ENCODE measurements at regions of chr12 and their contacts with region 1.

Region 1: DNA sequence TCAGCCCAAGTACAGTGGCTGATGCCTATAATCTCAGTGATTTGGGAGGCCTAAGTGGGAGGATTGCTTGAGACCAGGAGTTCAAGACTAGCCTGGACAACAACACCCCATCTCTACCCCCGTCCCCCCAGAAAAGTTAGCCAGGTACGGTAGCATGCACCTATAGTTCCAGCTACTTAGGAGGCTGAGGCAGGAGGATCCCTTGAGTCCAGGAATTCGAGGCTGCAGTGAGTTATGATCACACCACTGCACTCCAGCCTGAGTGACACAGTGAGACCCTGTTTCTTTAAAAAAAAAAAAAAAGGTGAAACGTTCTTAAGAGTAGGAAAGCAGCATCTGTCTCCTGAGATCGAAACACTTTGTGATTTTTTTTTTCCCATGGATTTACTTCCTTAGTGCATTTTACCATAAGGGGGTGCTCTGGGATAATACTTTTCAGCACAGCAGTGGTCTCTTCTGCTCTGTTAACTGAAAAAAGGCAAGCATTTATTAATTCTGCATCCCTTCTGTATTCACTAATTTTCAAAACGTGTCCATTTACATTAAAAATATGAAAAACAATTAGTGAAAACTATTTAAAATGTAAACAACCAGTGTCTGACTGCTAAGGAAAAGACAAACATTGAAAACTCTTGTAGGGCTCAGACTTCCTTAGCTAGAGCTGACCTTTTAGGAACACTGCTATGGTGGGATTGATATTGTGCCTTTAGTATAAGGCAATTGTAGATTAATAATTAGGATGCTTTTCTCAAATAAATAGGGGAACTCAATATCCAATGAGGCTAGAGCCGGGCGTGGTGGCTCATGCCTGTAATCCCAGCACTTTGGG is 31.2 kb upstream of the USP44 start:
- DNase-seq: peak in 1 of 2 experiments; percentile 40
- H3K4me3 ChIP-seq: no peak overlapping the region
- H3K4me3 Mint-ChIP-seq: no peak overlapping the region
- H3K27ac Mint-ChIP-seq: no peak overlapping the region
- H3K4me1 ChIP-seq: no peaks in the 10 kb centered on the region
- H3K4me1 Mint-ChIP-seq: no peaks in the 10 kb centered on the region
- H3K27me3 ChIP-seq: no peaks in the 10 kb centered on the region
- H3K27me3 Mint-ChIP-seq: no peaks in the 10 kb centered on the region
- CTCF ChIP-seq: peak; percentile 48 to 53

Region 2: DNA sequence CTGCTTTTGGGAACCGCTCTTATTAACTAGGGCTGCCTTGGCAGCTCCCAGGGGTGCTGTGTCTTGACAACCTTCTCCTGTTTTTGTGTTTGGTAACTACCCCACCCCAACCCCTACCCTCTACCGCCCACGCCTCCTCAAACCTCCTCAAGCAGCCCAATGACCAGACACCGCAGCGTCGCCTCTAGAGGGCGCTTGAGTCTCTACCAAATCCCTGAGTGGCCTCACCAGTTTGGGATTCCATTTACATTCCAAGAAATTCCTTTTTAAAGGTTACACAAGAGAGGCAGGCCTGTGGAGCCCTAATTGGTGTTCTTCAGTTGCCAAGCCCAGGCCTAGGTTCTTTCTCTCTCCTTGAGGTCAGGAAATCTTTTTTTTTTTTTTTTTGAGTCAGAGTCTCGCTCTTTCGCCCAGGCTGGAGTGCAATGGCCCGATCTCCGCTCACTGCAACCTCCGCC is 41.2 kb after region 1 on chr12:
- CTCF ChIA-PET with region 1: no interaction called
- POLR2A ChIA-PET with region 1: no interaction called
- intact Hi-C with region 1: loop called (anchors 1 kb)
- DNase-seq: peak; percentile 78
- H3K4me3 ChIP-seq: no peak overlapping the region
- H3K4me3 Mint-ChIP-seq: no peak overlapping the region
- H3K27ac Mint-ChIP-seq: peak overlapping the region; percentile 53
- H3K4me1 ChIP-seq: peaks cover 13% of the 10 kb centered on the region; the same call in 1 of the 2 replicates
- H3K4me1 Mint-ChIP-seq: no peaks in the 10 kb centered on the region
- H3K27me3 ChIP-seq: no peaks in the 10 kb centered on the region
- H3K27me3 Mint-ChIP-seq: no peaks in the 10 kb centered on the region
- CTCF ChIP-seq: peak; percentile 61 to 76

Region 3: GRCh38 chr12:95721350-95721749 is 138.9 kb after region 1 on chr12:
- CTCF ChIA-PET with region 1: no interaction called
- POLR2A ChIA-PET with region 1: no interaction called
- intact Hi-C with region 1: loop called (anchors 1 kb)
- DNase-seq: peak in 1 of 2 experiments; percentile 34
- H3K4me3 ChIP-seq: no peak overlapping the region
- H3K4me3 Mint-ChIP-seq: no peak overlapping the region
- H3K27ac Mint-ChIP-seq: peak overlapping the region; percentile 39
- H3K4me1 ChIP-seq: peaks cover 50% of the 10 kb centered on the region
- H3K4me1 Mint-ChIP-seq: peaks cover 25% of the 10 kb centered on the region
- H3K27me3 ChIP-seq: no peaks in the 10 kb centered on the region
- H3K27me3 Mint-ChIP-seq: no peaks in the 10 kb centered on the region
- CTCF ChIP-seq: peak in 1 of 2 experiments; percentile 37

Region 4: DNA sequence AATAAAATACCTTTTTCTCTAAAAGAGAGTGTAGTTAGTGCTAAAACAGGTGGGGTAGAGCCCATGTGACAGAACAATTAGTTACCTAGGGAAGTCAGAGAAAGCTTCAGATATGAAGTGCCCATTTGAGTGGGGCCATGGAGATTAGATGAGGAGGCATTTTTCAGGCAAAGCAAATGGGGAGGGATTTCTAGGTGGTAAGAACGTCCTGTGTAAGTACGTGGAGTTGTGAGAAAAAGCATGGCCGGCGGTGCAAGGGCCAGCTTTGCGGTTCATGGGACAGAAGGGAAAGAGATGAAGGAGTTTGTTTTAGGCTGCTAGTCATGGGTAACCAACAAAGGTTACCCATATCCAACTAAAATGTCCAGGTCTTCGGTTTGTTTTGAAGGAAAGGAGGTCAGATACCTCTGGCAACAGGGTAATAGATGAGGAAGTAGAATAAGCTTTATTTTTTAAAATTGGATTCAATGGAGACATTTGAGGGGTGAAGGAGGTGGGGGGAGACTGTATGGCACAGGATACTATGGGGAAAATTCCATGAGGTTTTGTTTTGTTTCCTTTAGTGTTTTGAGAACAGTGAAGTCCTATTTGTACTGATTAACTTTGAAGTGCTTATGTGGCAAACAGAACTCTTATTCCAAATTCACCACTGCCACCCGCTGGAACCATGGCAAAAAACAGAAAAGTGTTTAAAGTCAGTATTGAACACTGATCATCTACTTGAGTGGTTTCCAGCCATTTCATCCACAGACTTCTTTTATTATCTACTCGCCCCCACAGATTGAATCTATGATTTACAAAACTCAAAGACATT is 266.3 kb after region 1 on chr12:
- CTCF ChIA-PET with region 1: no interaction called
- POLR2A ChIA-PET with region 1: no interaction called
- intact Hi-C with region 1: loop called (anchors 1 kb)
- DNase-seq: peak in 1 of 2 experiments; percentile 39
- H3K4me3 ChIP-seq: no peak overlapping the region
- H3K4me3 Mint-ChIP-seq: peak overlapping the region; percentile 50
- H3K27ac Mint-ChIP-seq: no peak overlapping the region
- H3K4me1 ChIP-seq: no peaks in the 10 kb centered on the region
- H3K4me1 Mint-ChIP-seq: peaks cover 7% of the 10 kb centered on the region
- H3K27me3 ChIP-seq: no peaks in the 10 kb centered on the region
- H3K27me3 Mint-ChIP-seq: no peaks in the 10 kb centered on the region
- CTCF ChIP-seq: peak in 1 of 2 experiments; percentile 31

Region 5: DNA sequence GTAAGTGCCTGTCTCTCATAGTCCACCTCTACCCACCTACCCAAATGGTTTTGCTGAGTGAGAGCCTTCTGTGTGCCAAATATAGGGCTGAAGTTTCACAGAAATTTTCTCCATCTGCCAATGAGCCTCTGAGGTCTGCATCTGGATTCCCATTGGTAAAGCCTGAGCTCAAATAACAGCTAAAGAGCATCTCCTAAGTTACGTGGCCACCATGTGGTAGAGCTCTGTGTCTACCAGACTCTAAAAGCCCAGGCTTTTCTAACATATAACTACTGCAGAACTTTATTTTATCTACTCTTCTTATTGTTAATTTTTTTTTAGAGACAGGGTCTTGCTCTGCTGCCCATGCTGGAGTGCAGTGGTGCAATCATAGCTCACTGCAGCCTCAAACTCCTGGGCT is 376.7 kb after region 1 on chr12:
- CTCF ChIA-PET with region 1: interaction called, 6 read pairs
- POLR2A ChIA-PET with region 1: no interaction called
- intact Hi-C with region 1: loop called (anchors 10 kb)
- DNase-seq: peak in 1 of 2 experiments; percentile 28
- H3K4me3 ChIP-seq: no peak overlapping the region
- H3K4me3 Mint-ChIP-seq: no peak overlapping the region
- H3K27ac Mint-ChIP-seq: no peak overlapping the region
- H3K4me1 ChIP-seq: no peaks in the 10 kb centered on the region
- H3K4me1 Mint-ChIP-seq: no peaks in the 10 kb centered on the region
- H3K27me3 ChIP-seq: no peaks in the 10 kb centered on the region
- H3K27me3 Mint-ChIP-seq: peaks cover 5% of the 10 kb centered on the region
- CTCF ChIP-seq: peak; percentile 15 to 33

Region 6: DNA sequence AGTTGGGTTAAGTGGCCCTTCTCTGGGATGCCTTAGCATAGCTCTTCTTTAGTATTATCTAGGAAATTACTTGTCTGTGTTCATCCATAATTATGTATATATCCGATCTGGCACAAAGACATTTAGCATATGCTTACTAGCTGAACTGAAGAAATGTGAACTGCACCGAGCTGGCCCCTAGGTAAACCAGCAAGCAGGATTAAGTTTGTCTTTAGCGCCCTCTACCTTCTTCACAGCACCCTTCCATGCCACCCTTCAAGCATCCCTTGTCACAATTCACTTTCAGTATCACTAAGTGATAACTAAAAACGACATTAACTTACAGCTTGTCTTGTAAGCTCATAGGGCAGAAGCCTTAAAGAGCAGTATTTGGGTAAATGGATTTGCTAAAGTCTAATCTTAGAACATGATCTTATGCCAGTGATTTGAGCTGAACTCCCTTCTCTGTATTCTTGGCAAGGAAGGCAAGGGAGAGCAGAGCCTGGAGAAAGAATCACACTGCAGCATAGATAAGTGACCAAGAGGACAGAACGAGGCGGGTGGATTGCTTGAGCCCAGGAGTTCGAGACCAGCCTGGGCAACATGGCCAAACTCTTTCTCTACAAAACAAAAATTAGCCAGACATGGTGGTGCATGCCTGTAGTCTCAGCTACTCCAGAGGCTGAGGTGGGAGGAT is 416.3 kb after region 1 on chr12:
- CTCF ChIA-PET with region 1: interaction called, 10 read pairs
- POLR2A ChIA-PET with region 1: no interaction called
- intact Hi-C with region 1: loop called (anchors 10 kb)
- DNase-seq: peak; percentile 55 to 58
- H3K4me3 ChIP-seq: no peak overlapping the region
- H3K4me3 Mint-ChIP-seq: no peak overlapping the region
- H3K27ac Mint-ChIP-seq: no peak overlapping the region
- H3K4me1 ChIP-seq: no peaks in the 10 kb centered on the region; the same call in 1 of the 2 replicates
- H3K4me1 Mint-ChIP-seq: peaks cover 20% of the 10 kb centered on the region
- H3K27me3 ChIP-seq: no peaks in the 10 kb centered on the region
- H3K27me3 Mint-ChIP-seq: no peaks in the 10 kb centered on the region
- CTCF ChIP-seq: peak; percentile 64 to 67